Heart left ventricle (tissue), 16 donors: ENCODE measurements at regions of chr14 and their contacts with region 1.

Region 1: GRCh38 chr14:89351516-89352404 is 65.3 kb downstream of the FOXN3 start:
- DNase-seq: peak in 1 of 5 donors; percentile 30
- ATAC-seq: peak in 2 of 4 donors; percentile 39 to 55
- H3K4me3 ChIP-seq: peak overlapping the region in 2 of 12 donors; percentile 3 to 24
- H3K27ac ChIP-seq: peak overlapping the region; percentile 15 to 68 (median 46)
- H3K4me1 ChIP-seq: peaks cover 9 to 44% (median 21%) of the 10 kb centered on the region in 12 donors
- H3K27me3 ChIP-seq: no peaks in the 10 kb centered on the region
- CTCF ChIP-seq: no peak
- POLR2A ChIP-seq: no peak

Region 2: DNA sequence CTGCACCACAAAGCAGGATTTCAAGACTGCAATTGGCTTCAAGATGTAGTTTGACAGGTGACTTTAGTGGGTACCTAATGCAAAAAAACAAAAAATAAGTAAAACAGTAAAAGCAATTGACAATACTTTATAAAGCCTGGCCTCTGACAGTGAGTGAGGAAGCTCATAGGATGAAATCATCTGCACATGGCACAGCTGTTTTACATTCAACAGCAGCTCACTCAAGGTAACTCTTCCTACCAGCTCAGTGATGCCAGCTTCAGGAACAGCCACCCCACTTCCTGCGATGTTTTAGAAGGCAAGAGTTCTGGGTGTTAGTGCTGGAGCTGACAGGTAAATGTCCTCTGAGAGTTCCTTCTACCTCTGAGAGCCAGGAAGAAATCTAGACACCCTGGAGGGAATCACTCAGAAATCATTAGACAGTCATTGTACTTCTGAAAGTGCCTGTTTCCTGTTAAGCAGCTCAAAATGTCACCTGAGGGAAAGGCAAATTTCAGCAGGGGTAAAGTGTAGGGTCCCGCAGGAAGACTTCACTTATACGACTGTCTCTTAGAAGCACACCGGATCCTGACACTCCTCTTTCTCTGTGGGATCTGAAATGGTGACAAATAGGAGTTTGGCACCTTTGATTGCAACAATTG is 34.6 kb before region 1 on chr14:
- intact Hi-C with region 1: loop called in 1 of 10 experiments (anchors 5 kb)
- DNase-seq: no peak
- ATAC-seq: no peak
- H3K4me3 ChIP-seq: no peak overlapping the region
- H3K27ac ChIP-seq: no peak overlapping the region
- H3K4me1 ChIP-seq: peaks cover 0 to 35% (median 4%) of the 10 kb centered on the region in 12 donors
- H3K27me3 ChIP-seq: no peaks in the 10 kb centered on the region
- CTCF ChIP-seq: no peak
- POLR2A ChIP-seq: no peak

Region 3: GRCh38 chr14:89504602-89505313 is 153.0 kb after region 1 on chr14:
- intact Hi-C with region 1: no loop called
- DNase-seq: no peak
- ATAC-seq: peak; percentile 7 to 52 (median 44)
- H3K4me3 ChIP-seq: no peak overlapping the region
- H3K27ac ChIP-seq: peak overlapping the region in 1 of 12 donors; percentile 56
- H3K4me1 ChIP-seq: peaks cover 0 to 37% (median 11%) of the 10 kb centered on the region in 12 donors
- H3K27me3 ChIP-seq: no peaks in the 10 kb centered on the region
- CTCF ChIP-seq: no peak
- POLR2A ChIP-seq: no peak